Right cardiac atrium (tissue), 5 donors: ENCODE measurements at regions of chr2 and their contacts with region 1.

Region 1: DNA sequence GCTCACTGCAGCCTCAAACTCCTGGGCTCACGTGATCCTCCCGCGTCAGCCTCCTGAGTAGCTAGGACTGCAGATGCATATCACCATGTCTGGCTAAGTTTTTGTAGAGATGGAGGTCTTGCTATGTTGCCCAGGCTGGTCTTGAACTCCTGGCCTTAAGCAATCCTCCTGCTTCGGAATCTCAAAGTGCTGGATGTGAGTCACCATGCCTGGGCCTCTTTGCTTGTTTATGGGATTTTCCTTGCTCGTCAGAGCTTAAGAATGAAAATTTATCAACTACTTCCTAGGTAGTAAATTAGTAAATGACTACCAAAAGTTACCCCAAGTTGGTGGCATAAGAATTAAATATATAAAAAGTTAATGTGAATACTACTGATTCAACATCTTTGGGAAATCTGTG is 51.0 kb downstream of the ACTR3 start:
- DNase-seq: no peak
- ATAC-seq: no peak
- H3K4me3 ChIP-seq: no peak overlapping the region
- H3K27ac ChIP-seq: no peak overlapping the region
- H3K4me1 ChIP-seq: no peaks in the 10 kb centered on the region
- H3K27me3 ChIP-seq: no peaks in the 10 kb centered on the region

Region 2: GRCh38 chr2:113734185-113734584 is 206.7 kb before region 1 on chr2:
- intact Hi-C with region 1: loop called in 1 of 4 experiments (anchors 10 kb)
- DNase-seq: no peak
- ATAC-seq: no peak
- H3K4me3 ChIP-seq: no peak overlapping the region
- H3K27ac ChIP-seq: no peak overlapping the region
- H3K4me1 ChIP-seq: no peaks in the 10 kb centered on the region
- H3K27me3 ChIP-seq: no peaks in the 10 kb centered on the region

Region 3: DNA sequence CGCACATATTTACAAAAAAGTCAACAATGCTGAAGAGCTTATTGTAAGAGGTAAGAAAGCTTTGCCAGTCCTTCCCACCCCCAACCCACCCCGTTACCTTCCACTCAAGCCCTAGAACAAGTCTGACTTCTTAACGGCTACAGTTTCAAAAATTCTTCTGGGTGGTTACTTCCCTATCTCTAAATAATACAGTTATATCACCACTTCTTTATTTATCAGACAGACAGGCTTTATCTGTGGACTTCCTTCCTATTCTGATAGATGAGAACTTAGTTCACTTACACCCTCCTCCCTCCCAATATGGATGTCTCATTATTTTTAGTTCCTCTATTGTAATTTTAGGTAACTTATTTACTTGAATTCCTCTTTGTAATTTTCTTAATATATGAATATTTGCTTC is 77.7 kb before region 1 on chr2:
- intact Hi-C with region 1: no loop called
- DNase-seq: no peak
- ATAC-seq: peak in 1 of 2 donors; percentile 21
- H3K4me3 ChIP-seq: no peak overlapping the region
- H3K27ac ChIP-seq: no peak overlapping the region
- H3K4me1 ChIP-seq: no peaks in the 10 kb centered on the region
- H3K27me3 ChIP-seq: no peaks in the 10 kb centered on the region